Calu3 (cell line): ENCODE measurements at regions of chr3 and their contacts with region 1.

Region 1: DNA sequence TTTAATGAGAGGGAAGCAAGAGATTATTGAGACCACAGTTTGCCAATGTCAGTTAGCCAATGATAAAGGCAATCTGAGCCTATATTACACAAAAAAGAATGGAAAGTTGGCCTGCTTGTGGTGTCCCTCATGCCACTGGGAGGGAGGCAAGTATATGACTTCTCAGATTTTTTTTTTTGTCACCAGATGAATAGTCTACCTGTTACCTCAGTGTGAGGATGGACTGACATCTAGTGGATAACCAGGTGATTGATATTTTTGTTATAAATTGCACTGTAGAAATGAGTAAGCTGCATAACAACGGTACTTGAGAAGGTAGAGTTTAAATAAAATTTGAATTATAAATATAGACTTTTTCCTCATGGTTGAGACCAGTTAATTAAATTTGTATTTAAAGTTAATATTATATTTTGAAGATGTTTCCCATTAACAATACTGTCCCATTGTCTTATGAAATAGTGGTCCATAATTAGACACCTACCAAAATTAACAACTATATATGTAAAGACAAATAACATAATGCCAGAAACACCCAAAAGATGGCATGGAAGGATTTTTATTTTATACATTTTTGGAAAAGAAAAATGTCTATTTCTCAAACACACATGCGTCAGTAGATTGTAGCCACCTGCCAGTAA is 237.8 kb upstream of the GADL1 start:
- DNase-seq: peak; percentile 17
- H3K4me3 Mint-ChIP-seq: no peak overlapping the region
- H3K27ac Mint-ChIP-seq: no peak overlapping the region
- H3K4me1 Mint-ChIP-seq: no peaks in the 10 kb centered on the region
- H3K27me3 Mint-ChIP-seq: no peaks in the 10 kb centered on the region
- CTCF ChIP-seq: no peak

Region 2: GRCh38 chr3:30042274-30042859 is 1089.9 kb before region 1 on chr3:
- CTCF ChIA-PET with region 1: no interaction called
- intact Hi-C with region 1: loop called (anchors 2 kb)
- DNase-seq: peak; percentile 71
- H3K4me3 Mint-ChIP-seq: no peak overlapping the region
- H3K27ac Mint-ChIP-seq: no peak overlapping the region
- H3K4me1 Mint-ChIP-seq: no peaks in the 10 kb centered on the region
- H3K27me3 Mint-ChIP-seq: no peaks in the 10 kb centered on the region
- CTCF ChIP-seq: peak; percentile 23

Region 3: DNA sequence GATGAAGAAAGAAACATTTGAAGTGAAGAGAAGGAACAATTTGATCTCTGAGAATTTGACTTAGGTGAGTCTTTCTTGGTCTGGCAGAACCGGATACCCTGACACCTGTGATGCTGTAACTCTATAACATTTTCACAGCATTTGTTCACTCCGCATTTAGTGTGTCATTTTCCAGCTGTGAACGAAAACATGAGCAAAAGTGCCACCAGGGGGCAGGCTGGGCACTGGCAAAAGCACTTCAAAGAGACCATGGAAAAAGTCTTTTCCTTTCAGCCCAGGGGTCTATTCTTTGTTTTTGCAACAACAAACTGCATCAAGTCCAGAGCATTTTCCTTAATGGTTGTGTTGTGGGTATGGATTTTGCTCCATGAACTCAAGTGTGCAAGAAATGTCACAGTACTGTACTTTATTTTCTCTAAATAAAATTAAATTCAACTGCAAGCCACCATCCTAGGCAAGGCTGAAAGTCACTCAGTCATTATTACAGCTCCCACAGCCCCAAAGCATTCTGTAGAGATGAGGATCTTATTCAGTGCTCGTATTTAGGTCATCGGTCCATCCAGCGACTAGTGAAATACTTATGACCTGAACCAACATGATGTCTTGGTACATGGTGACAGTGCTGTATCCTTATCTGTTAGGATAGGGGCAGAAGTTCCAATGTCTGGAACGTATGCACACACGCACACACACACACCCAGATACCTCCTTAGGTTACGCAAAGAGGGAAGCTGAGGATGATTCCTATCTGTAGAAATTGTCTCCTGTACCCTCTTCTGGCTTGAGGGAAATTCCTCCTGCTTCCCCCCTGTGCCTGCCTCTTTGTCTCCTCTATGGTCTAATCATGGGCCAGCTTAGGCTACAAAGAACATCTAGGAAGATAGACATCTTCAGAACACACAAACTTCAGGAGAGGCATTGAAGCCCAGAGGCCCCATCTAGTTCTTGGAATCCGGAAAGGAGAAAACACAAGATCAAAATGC is 363.3 kb before region 1 on chr3:
- CTCF ChIA-PET with region 1: interaction called, 11 read pairs
- intact Hi-C with region 1: loop called (anchors 1 kb)
- DNase-seq: peak; percentile 79
- H3K4me3 Mint-ChIP-seq: no peak overlapping the region
- H3K27ac Mint-ChIP-seq: no peak overlapping the region
- H3K4me1 Mint-ChIP-seq: no peaks in the 10 kb centered on the region
- H3K27me3 Mint-ChIP-seq: no peaks in the 10 kb centered on the region
- CTCF ChIP-seq: peak; percentile 72

Region 4: DNA sequence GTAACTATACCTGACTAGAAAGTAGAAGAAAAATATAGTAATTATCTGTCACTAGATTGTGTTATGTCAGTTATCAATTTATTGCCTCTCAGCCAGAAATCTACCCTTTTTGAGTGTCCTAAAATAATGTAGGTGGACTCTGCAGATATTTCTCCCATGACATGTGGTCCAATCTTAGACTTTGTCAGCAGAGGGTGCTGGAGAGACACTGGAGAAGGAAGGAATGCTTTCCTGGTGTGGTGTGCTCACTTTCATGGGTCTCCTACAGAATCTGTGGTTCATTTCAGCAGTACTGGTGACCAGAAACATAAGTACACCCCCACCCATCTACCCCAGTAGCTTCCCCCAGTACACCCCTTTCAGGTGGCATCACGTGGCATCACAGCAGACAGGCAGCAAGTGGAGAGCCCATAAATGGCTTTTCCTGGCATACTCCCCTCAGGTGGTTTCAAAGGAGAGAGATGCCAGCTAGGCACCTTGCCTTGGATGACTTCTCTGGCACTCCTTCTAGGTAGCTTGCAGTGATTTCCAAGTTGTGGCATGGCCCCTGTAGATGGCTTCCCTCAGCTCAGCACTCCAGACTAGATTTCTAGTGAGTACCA is 352.5 kb before region 1 on chr3:
- CTCF ChIA-PET with region 1: no interaction called
- intact Hi-C with region 1: loop called (anchors 1 kb)
- DNase-seq: peak; percentile 49
- H3K4me3 Mint-ChIP-seq: no peak overlapping the region
- H3K27ac Mint-ChIP-seq: no peak overlapping the region
- H3K4me1 Mint-ChIP-seq: peaks cover 8% of the 10 kb centered on the region
- H3K27me3 Mint-ChIP-seq: peaks cover 29% of the 10 kb centered on the region
- CTCF ChIP-seq: peak; percentile 31

Region 5: GRCh38 chr3:30934208-30934550 is 198.1 kb before region 1 on chr3:
- CTCF ChIA-PET with region 1: interaction called, 6 read pairs
- intact Hi-C with region 1: loop called (anchors 5 kb)
- DNase-seq: peak; percentile 17
- H3K4me3 Mint-ChIP-seq: no peak overlapping the region
- H3K27ac Mint-ChIP-seq: no peak overlapping the region
- H3K4me1 Mint-ChIP-seq: no peaks in the 10 kb centered on the region
- H3K27me3 Mint-ChIP-seq: peaks cover 9% of the 10 kb centered on the region
- CTCF ChIP-seq: no peak

Region 6: DNA sequence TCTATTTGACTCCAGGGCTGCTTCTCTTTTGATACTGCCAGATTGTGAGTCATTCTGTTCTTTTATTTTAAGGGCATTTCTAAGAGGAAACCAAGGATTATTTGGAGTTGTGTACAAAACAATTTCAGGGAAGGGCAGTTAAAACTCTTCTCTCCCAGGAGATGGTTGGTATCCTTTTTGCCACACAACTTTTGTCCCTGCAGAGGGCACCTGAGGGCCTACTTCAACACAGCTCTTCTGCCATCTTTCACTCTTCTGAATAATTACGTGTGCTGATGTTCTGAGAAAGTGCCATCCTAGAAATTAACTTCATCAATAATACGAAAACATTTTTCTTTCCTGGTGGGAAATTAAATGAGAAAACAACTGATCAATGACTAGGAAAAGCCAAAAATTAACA is 162.1 kb before region 1 on chr3:
- CTCF ChIA-PET with region 1: no interaction called
- intact Hi-C with region 1: loop called (anchors 2 kb)
- DNase-seq: peak; percentile 9
- H3K4me3 Mint-ChIP-seq: no peak overlapping the region
- H3K27ac Mint-ChIP-seq: no peak overlapping the region
- H3K4me1 Mint-ChIP-seq: no peaks in the 10 kb centered on the region
- H3K27me3 Mint-ChIP-seq: peaks cover 8% of the 10 kb centered on the region
- CTCF ChIP-seq: no peak

Region 7: GRCh38 chr3:31077021-31077601 is 55.1 kb before region 1 on chr3:
- CTCF ChIA-PET with region 1: no interaction called
- intact Hi-C with region 1: no loop called
- DNase-seq: no peak
- H3K4me3 Mint-ChIP-seq: no peak overlapping the region
- H3K27ac Mint-ChIP-seq: no peak overlapping the region
- H3K4me1 Mint-ChIP-seq: no peaks in the 10 kb centered on the region
- H3K27me3 Mint-ChIP-seq: peaks cover 17% of the 10 kb centered on the region
- CTCF ChIP-seq: no peak